Breast epithelium (tissue), 4 donors: ENCODE measurements at regions of chr10 and their contacts with region 1.

Region 1: GRCh38 chr10:30270247-30270646 is 78.8 kb downstream of the MTPAP start:
- DNase-seq: no peak
- H3K4me3 ChIP-seq: no peak overlapping the region
- H3K27ac ChIP-seq: no peak overlapping the region
- H3K4me1 ChIP-seq: no peaks in the 10 kb centered on the region
- H3K27me3 ChIP-seq: no peaks in the 10 kb centered on the region
- CTCF ChIP-seq: no peak
- POLR2A ChIP-seq: no peak

Region 2: GRCh38 chr10:29932991-29933390 is 337.3 kb before region 1 on chr10:
- intact Hi-C with region 1: loop called (anchors 5 kb)
- DNase-seq: no peak
- H3K4me3 ChIP-seq: no peak overlapping the region
- H3K27ac ChIP-seq: no peak overlapping the region
- H3K4me1 ChIP-seq: no peaks in the 10 kb centered on the region
- H3K27me3 ChIP-seq: no peaks in the 10 kb centered on the region
- CTCF ChIP-seq: no peak
- POLR2A ChIP-seq: no peak